H1 (cell line): ENCODE measurements at regions of chr10 and their contacts with region 1.

Region 1: DNA sequence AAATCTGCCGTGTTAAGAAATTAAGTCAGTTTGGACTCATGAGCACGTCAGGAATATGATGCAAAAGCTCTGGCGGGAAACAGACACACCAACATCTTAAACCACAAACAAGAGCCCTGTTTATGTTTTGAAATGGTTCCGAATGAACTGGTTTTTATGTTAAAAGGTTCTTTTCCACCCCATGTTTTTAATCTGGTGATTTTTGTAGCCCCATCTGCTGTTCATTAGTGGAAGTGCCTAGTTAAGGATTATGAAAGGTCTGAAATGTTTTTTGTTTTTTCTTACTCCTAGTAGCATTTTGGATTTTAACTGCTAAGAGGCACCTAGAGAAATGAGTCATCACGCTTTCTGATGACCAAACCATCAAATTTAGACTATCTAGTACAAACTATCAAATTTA is 404.1 kb upstream of the MKI67 start:
- DNase-seq: no peak
- H3K4me3 ChIP-seq: no peak overlapping the region
- H3K27ac ChIP-seq: no peak overlapping the region
- H3K4me1 ChIP-seq: peaks cover 0 to 16% (median 6%) of the 10 kb centered on the region in 4 experiments; a peak in 5 of 7 replicates
- H3K27me3 ChIP-seq: no peaks in the 10 kb centered on the region; a peak in 1 of 7 replicates
- CTCF ChIP-seq: peak in 2 of 3 experiments; percentile 29 to 50; a peak in 2 of 4 replicates
- EP300 ChIP-seq: no peak
- POLR2A ChIP-seq: no peak
- RAD21 ChIP-seq: peak; percentile 36 to 38

Region 2: DNA sequence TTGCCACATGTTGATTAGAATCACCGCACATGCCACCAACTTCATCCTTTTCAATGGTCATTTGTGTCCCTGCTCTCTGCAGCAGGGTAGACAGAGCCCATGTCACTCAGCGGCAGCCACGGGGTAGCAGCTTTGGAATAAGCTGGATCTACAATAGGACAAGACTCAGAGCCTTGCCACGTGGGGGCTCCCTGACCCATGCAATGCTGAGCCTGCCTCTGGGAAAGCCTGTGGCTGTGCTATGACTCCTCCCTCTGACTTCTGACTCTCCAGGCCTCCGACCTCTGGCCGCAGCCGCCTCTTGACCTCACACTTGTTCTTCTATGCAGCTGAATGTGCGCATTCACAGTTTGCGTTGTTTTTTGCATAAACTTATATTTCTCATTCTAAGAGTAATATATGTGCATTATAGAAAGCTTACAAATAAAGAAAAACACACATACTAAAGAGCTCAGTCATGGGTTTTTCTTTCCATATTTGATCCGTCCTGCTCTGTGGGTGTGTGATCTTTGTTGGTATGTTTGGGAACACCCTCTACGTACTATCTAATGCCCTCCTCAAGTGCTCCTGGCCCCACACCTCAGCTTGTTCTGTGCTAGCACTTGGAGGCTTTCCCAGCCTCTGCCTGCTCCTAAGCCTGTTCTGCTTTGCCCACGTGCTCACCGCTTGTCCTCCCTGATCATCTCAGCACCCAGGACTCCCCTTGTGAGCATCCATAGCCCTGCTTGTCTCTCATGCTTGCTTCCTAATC is 206.0 kb before region 1 on chr10:
- CTCF ChIA-PET with region 1: interaction called, 16 read pairs
- POLR2A ChIA-PET with region 1: no interaction called
- DNase-seq: peak; percentile 17 to 63
- H3K4me3 ChIP-seq: no peak overlapping the region
- H3K27ac ChIP-seq: no peak overlapping the region
- H3K4me1 ChIP-seq: no peaks in the 10 kb centered on the region
- H3K27me3 ChIP-seq: no peaks in the 10 kb centered on the region
- CTCF ChIP-seq: peak; percentile 52 to 55 (median 52)
- EP300 ChIP-seq: no peak
- POLR2A ChIP-seq: no peak
- RAD21 ChIP-seq: peak; percentile 85 to 88

Region 3: DNA sequence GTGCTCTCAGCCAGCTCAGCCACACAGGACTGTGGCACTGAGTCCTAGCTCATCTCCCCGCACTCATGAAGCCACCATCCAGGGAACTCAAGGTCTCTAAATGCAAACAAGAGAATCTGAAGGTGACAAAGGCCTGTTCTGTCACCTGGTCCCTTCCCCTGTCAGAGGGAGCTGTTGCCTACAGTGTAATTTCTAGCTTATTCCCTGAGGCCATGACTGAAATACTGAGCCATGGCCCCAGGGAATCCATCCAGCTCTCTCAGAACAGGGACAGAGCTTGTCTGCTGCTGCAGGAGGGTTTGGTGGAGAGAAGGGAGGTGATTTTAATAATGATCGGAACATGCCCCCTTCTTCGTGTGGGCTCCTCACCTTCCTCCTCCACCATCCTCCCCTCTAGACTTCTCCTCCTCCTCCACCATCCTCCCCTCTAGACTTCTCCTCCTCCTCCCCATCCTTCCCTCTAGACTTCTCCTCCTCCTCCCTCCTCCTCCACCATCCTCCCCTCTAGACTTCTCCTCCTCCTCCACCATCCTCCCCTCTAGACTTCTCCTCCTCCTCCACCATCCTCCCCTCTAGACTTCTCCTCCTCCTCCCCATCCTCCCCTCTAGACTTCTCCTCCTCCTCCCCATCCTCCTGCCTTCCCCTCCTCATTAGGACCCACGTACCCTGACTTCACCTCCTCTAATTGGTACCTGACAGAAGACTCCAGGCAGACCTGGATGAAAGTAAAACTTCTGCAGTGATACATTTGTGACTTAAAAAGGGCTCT is 66.1 kb before region 1 on chr10:
- CTCF ChIA-PET with region 1: no interaction called
- POLR2A ChIA-PET with region 1: no interaction called
- DNase-seq: no peak
- H3K4me3 ChIP-seq: no peak overlapping the region
- H3K27ac ChIP-seq: no peak overlapping the region
- H3K4me1 ChIP-seq: no peaks in the 10 kb centered on the region; a peak in 1 of 7 replicates
- H3K27me3 ChIP-seq: no peaks in the 10 kb centered on the region; a peak in 1 of 7 replicates
- CTCF ChIP-seq: no peak
- EP300 ChIP-seq: no peak
- POLR2A ChIP-seq: no peak
- RAD21 ChIP-seq: no peak

Region 4: GRCh38 chr10:128512767-128513166 is 17.5 kb before region 1 on chr10:
- CTCF ChIA-PET with region 1: interaction called, 21 read pairs
- POLR2A ChIA-PET with region 1: interaction called, 4 read pairs
- DNase-seq: no peak
- H3K4me3 ChIP-seq: no peak overlapping the region
- H3K27ac ChIP-seq: no peak overlapping the region
- H3K4me1 ChIP-seq: 0 out of 7 replicates have a peak, but pooled peaks cover 0 to 2% (median 0%) of the 10 kb centered on the region in 4 experiments
- H3K27me3 ChIP-seq: no peaks in the 10 kb centered on the region
- CTCF ChIP-seq: no peak
- EP300 ChIP-seq: no peak
- POLR2A ChIP-seq: no peak
- RAD21 ChIP-seq: no peak

Region 5: GRCh38 chr10:128540781-128541761 is 10.8 kb after region 1 on chr10:
- CTCF ChIA-PET with region 1: interaction called, 52 read pairs
- POLR2A ChIA-PET with region 1: interaction called, 8 read pairs
- DNase-seq: peak; percentile 66 to 79
- H3K4me3 ChIP-seq: peak overlapping the region; percentile 23 to 57 (median 46)
- H3K27ac ChIP-seq: no peak overlapping the region
- H3K4me1 ChIP-seq: peaks cover 2 to 42% (median 33%) of the 10 kb centered on the region in 4 experiments
- H3K27me3 ChIP-seq: peaks cover 0 to 3% (median under 1%) of the 10 kb centered on the region in 4 experiments; a peak in 1 of 7 replicates
- CTCF ChIP-seq: peak; percentile 45 to 58 (median 46)
- EP300 ChIP-seq: peak in 1 of 2 experiments; percentile 82; a peak in 1 of 3 replicates
- POLR2A ChIP-seq: no peak
- RAD21 ChIP-seq: peak; percentile 70 to 79

Region 6: GRCh38 chr10:128557149-128557710 is 26.9 kb after region 1 on chr10:
- CTCF ChIA-PET with region 1: interaction called, 11 read pairs
- POLR2A ChIA-PET with region 1: no interaction called
- DNase-seq: no peak
- H3K4me3 ChIP-seq: no peak overlapping the region
- H3K27ac ChIP-seq: no peak overlapping the region
- H3K4me1 ChIP-seq: peaks cover 0 to 3% (median 2%) of the 10 kb centered on the region in 4 experiments; a peak in 2 of 7 replicates
- H3K27me3 ChIP-seq: no peaks in the 10 kb centered on the region
- CTCF ChIP-seq: peak in 2 of 3 experiments; percentile 2 to 30; a peak in 2 of 4 replicates
- EP300 ChIP-seq: no peak
- POLR2A ChIP-seq: no peak
- RAD21 ChIP-seq: peak in 1 of 2 experiments; percentile 22; a peak in 1 of 4 replicates